B cell (primary cell): ENCODE measurements at regions of chr16 and their contacts with region 1.

Region 1: DNA sequence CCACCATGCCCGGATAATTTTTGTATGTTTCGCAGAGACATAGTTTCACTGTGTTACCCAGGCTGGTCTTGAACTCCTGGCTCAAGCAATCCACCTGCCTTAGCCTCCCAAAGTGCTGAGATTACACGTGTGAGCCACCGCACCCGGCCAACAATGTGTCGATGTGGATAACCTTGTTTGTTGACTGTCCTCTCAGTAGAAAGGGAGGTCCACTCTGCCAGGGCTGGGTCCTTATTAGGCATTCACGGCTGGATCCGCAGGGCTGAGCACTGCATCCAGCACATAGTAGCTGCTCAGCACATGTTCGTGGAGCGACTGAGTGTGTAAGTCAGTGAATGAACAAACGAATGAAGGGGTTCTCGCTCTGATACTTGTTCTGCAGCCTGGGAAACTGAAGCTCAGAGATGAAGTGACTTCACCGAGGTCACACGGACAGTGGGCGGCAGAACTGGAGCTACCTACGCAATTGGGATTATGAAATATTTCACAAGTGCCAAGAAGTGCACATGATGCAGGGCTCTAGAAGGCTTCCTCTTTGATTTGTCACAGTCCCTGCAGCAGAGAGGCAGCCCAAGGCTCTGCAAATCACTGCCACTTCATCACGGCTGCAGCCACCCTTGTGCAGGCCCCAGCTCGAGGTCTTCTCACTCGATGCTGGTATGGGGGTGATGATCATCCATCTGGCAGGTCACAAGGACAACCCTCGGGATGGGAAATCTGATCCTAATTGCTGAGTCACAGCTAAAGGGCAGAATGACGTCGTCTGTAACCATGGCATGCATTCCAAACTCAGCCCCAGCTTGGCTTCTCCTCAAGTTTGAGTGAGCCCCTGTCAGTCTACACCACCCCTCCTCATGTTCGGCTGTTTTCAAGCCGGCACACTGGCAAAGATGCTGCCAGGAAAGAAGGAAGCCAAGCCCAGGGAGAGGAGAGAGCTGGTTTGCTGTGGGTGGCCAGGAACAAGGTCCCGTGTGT is 28.0 kb upstream of the SNN start:
- DNase-seq: no peak
- ATAC-seq: no peak
- H3K4me3 ChIP-seq: no peak overlapping the region
- H3K4me3 Mint-ChIP-seq: no peak overlapping the region
- H3K27ac ChIP-seq: no peak overlapping the region
- H3K27ac Mint-ChIP-seq: no peak overlapping the region
- H3K4me1 ChIP-seq: peaks cover 7 to 9% of the 10 kb centered on the region in 2 donors
- H3K4me1 Mint-ChIP-seq: peaks cover 6% of the 10 kb centered on the region
- H3K27me3 ChIP-seq: no peaks in the 10 kb centered on the region
- H3K27me3 Mint-ChIP-seq: no peaks in the 10 kb centered on the region
- CTCF ChIP-seq: no peak

Region 2: GRCh38 chr16:11396241-11397048 is 243.8 kb before region 1 on chr16:
- CTCF ChIA-PET with region 1: interaction called, 14 read pairs
- POLR2A ChIA-PET with region 1: no interaction called
- intact Hi-C with region 1: no loop called
- DNase-seq: peak; percentile 76
- ATAC-seq: peak; percentile 79
- H3K4me3 ChIP-seq: no peak overlapping the region
- H3K4me3 Mint-ChIP-seq: no peak overlapping the region
- H3K27ac ChIP-seq: no peak overlapping the region
- H3K27ac Mint-ChIP-seq: no peak overlapping the region
- H3K4me1 ChIP-seq: peaks cover 0 to 6% of the 10 kb centered on the region in 2 donors
- H3K4me1 Mint-ChIP-seq: peaks cover 8% of the 10 kb centered on the region
- H3K27me3 ChIP-seq: peaks cover 0 to 3% (median 1%) of the 10 kb centered on the region in 4 experiments
- H3K27me3 Mint-ChIP-seq: no peaks in the 10 kb centered on the region
- CTCF ChIP-seq: peak; percentile 99

Region 3: GRCh38 chr16:11586856-11587642 is 53.2 kb before region 1 on chr16 and contains the start of gene LITAF:
- CTCF ChIA-PET with region 1: interaction called, 13 read pairs
- POLR2A ChIA-PET with region 1: no interaction called
- intact Hi-C with region 1: loop called (anchors 2 kb)
- DNase-seq: peak; percentile 78
- ATAC-seq: peak; percentile 59
- H3K4me3 ChIP-seq: peak within 1 kb of the TSS; percentile 71 to 91 (median 75)
- H3K4me3 Mint-ChIP-seq: peak within 1 kb of the TSS; percentile 94
- H3K27ac ChIP-seq: peak within 1 kb of the TSS; percentile 82 to 97
- H3K27ac Mint-ChIP-seq: peak within 1 kb of the TSS; percentile 97
- H3K4me1 ChIP-seq: peaks cover 42 to 50% of the 10 kb centered on the region in 2 donors
- H3K4me1 Mint-ChIP-seq: peaks cover 48% of the 10 kb centered on the region
- H3K27me3 ChIP-seq: no peaks in the 10 kb centered on the region
- H3K27me3 Mint-ChIP-seq: no peaks in the 10 kb centered on the region
- CTCF ChIP-seq: no peak
- total RNA-seq, gene LITAF: 125 and 131 TPM in 2 replicates

Region 4: GRCh38 chr16:11658894-11659708 is 18.9 kb after region 1 on chr16:
- CTCF ChIA-PET with region 1: interaction called, 15 read pairs
- POLR2A ChIA-PET with region 1: interaction called, 6 read pairs
- intact Hi-C with region 1: no loop called
- DNase-seq: no peak
- ATAC-seq: no peak
- H3K4me3 ChIP-seq: no peak overlapping the region
- H3K4me3 Mint-ChIP-seq: no peak overlapping the region
- H3K27ac ChIP-seq: no peak overlapping the region
- H3K27ac Mint-ChIP-seq: no peak overlapping the region
- H3K4me1 ChIP-seq: peaks cover 2% of the 10 kb centered on the region in 2 donors
- H3K4me1 Mint-ChIP-seq: peaks cover 8% of the 10 kb centered on the region
- H3K27me3 ChIP-seq: no peaks in the 10 kb centered on the region
- H3K27me3 Mint-ChIP-seq: no peaks in the 10 kb centered on the region
- CTCF ChIP-seq: no peak

Region 5: DNA sequence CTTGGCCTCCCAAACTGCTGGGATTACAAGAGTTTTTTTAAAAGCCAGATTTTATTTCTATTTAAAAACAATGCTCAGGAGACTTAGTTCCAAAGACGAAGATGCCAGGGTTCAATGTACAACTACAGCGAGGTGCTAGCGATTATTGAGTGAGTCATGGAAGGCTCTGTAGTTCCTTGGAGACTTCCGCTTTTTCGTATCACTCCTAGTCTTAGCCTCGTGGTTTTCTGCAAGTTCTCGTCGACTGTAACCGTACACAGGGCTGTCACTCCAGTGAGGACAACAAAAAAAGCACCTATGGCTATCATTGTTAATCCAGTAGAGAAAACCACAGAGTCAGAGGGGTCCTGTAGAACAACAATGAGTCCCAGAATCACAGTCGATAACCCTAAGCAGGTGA is 179.6 kb after region 1 on chr16:
- CTCF ChIA-PET with region 1: interaction called, 3 read pairs
- POLR2A ChIA-PET with region 1: no interaction called
- intact Hi-C with region 1: loop called (anchors 2 kb)
- DNase-seq: no peak
- ATAC-seq: peak; percentile 41
- H3K4me3 ChIP-seq: no peak overlapping the region
- H3K4me3 Mint-ChIP-seq: no peak overlapping the region
- H3K27ac ChIP-seq: no peak overlapping the region
- H3K27ac Mint-ChIP-seq: no peak overlapping the region
- H3K4me1 ChIP-seq: no peaks in the 10 kb centered on the region
- H3K4me1 Mint-ChIP-seq: peaks cover 2% of the 10 kb centered on the region
- H3K27me3 ChIP-seq: no peaks in the 10 kb centered on the region
- H3K27me3 Mint-ChIP-seq: no peaks in the 10 kb centered on the region
- CTCF ChIP-seq: no peak